ENCODE measurements at regions of chr1 and their contacts with region 1.

Region 1: GRCh38 chr1:203593723-203594122 is 32.9 kb upstream of the ATP2B4 start:
- DNase-seq: peak; percentile 68
- ATAC-seq: peak; percentile 94
- H3K4me3 Mint-ChIP-seq: no peak overlapping the region
- H3K27ac Mint-ChIP-seq: no peak overlapping the region
- H3K4me1 Mint-ChIP-seq: peaks cover 8% of the 10 kb centered on the region
- H3K27me3 Mint-ChIP-seq: no peaks in the 10 kb centered on the region
- CTCF ChIP-seq: no peak

Region 2: GRCh38 chr1:203603940-203604591 is 10.3 kb after region 1 on chr1:
- CTCF ChIA-PET with region 1: interaction called, 10 read pairs
- POLR2A ChIA-PET with region 1: interaction called, 7 read pairs
- intact Hi-C with region 1: no loop called
- DNase-seq: no peak
- ATAC-seq: no peak
- H3K4me3 Mint-ChIP-seq: no peak overlapping the region
- H3K27ac Mint-ChIP-seq: no peak overlapping the region
- H3K4me1 Mint-ChIP-seq: peaks cover 26% of the 10 kb centered on the region
- H3K27me3 Mint-ChIP-seq: no peaks in the 10 kb centered on the region
- CTCF ChIP-seq: no peak

Measured in activated CD8-positive, alpha-beta T cell treated with anti-CD3 and anti-CD28 coated beads for 36 hours (primary cell).